B cell (primary cell): ENCODE measurements at regions of chr1 and their contacts with region 1.

Region 1: DNA sequence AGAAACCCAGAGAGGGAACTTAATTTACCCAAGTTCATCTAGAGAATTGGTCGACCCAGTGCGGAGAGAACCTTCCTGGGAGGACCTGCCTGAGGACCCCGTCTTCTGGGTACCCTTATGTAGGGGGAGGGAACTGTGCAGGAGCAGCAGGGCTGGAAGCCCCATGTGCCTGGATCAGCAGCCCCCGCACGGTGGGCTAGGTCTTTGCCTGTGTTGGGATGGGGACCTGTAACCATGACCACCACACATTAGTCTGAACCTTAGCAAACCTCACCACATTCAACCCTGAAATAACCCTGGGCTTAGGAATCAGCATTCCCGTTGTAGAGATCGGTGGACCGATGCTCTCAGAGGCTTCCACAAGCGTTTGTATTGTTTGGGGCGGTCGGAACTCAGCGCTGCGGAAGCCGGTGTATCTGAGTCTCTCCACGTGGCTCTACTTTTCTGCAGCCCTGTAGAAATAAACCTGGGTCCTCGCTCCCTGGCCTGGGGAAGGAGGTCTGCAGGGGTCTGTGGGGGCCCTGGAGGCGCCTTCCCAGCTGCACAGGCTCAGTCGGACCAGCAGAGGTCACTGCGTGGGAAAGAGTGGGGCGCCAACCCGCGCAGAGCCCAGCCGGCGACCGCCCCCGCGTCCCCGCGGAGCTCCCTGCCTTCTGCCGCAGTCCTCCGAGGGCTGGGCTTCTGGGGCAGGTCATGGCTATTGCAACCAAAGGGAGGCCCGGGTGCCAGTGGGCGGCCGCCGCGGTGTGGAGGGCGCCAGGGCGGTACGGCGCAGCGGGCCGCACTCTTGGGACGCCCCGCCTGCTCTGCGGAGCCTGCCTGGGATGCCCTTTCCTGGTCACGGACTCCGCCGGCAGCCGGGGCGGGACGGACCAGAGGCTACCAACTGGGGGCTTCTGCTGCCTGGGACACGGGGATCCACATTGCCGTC is 36.2 kb upstream of the KCNA10 start:
- DNase-seq: peak; percentile 74
- ATAC-seq: peak; percentile 93
- H3K4me3 ChIP-seq: peak overlapping the region in 2 of 5 experiments; percentile 20 to 27
- H3K4me3 Mint-ChIP-seq: peak overlapping the region; percentile 50
- H3K27ac ChIP-seq: no peak overlapping the region
- H3K27ac Mint-ChIP-seq: no peak overlapping the region
- H3K4me1 ChIP-seq: peaks cover 9 to 12% of the 10 kb centered on the region in 2 donors
- H3K4me1 Mint-ChIP-seq: peaks cover 4% of the 10 kb centered on the region
- H3K27me3 ChIP-seq: peaks cover 0 to 57% (median 24%) of the 10 kb centered on the region in 4 experiments
- H3K27me3 Mint-ChIP-seq: peaks cover 78% of the 10 kb centered on the region
- CTCF ChIP-seq: peak; percentile 83

Region 2: DNA sequence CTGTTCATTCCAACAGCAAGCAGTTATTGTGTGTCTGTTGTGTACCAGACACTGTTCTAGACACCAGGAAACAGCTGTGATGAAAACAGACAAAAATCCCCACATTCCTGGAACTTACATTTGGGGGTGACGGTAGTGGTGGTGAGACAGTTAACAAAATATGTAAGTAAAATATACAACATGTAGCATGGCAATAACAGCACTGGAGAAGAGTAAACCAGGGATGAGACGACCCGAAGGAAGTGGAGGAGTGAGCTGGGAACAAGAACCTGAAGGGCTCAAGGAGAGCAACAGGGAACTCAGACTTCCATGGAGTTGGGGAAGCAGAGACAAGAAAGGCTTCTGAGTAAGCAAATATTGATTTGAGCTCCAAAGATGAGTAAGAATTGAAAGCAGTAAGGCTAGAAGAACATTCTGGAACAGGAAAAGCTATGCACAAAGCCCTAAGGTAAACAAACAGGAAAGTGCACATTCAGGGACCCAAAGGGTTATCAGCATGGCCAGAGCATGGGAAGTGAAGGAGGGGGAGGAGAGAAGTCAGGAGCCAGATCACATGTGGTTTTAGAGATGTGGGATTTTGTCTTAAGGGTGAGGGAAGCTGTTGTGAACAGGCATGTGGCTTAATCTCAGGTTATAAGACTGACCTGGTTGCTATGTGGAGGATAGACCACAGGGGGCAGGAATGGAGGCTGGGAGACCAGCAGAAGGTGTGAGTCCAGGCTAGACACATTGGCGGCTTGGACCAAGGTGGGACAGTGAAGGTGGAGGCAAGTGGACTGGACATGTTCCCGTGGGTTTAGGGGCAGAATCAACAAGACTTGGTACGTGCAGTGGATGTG is 637.1 kb before region 1 on chr1:
- CTCF ChIA-PET with region 1: no interaction called
- POLR2A ChIA-PET with region 1: no interaction called
- intact Hi-C with region 1: no loop called
- DNase-seq: no peak
- ATAC-seq: no peak
- H3K4me3 ChIP-seq: no peak overlapping the region
- H3K4me3 Mint-ChIP-seq: no peak overlapping the region
- H3K27ac ChIP-seq: no peak overlapping the region
- H3K27ac Mint-ChIP-seq: no peak overlapping the region
- H3K4me1 ChIP-seq: no peaks in the 10 kb centered on the region
- H3K4me1 Mint-ChIP-seq: peaks cover 3% of the 10 kb centered on the region
- H3K27me3 ChIP-seq: peaks cover 0 to 18% (median 7%) of the 10 kb centered on the region in 4 experiments
- H3K27me3 Mint-ChIP-seq: peaks cover 23% of the 10 kb centered on the region
- CTCF ChIP-seq: no peak

Region 3: GRCh38 chr1:110508038-110508940 is 46.8 kb before region 1 on chr1:
- CTCF ChIA-PET with region 1: no interaction called
- POLR2A ChIA-PET with region 1: no interaction called
- intact Hi-C with region 1: no loop called
- DNase-seq: no peak
- ATAC-seq: no peak
- H3K4me3 ChIP-seq: no peak overlapping the region
- H3K4me3 Mint-ChIP-seq: no peak overlapping the region
- H3K27ac ChIP-seq: no peak overlapping the region
- H3K27ac Mint-ChIP-seq: no peak overlapping the region
- H3K4me1 ChIP-seq: no peaks in the 10 kb centered on the region
- H3K4me1 Mint-ChIP-seq: no peaks in the 10 kb centered on the region
- H3K27me3 ChIP-seq: peaks cover 0 to 6% (median 0%) of the 10 kb centered on the region in 4 experiments
- H3K27me3 Mint-ChIP-seq: peaks cover 15% of the 10 kb centered on the region
- CTCF ChIP-seq: no peak

Region 4: DNA sequence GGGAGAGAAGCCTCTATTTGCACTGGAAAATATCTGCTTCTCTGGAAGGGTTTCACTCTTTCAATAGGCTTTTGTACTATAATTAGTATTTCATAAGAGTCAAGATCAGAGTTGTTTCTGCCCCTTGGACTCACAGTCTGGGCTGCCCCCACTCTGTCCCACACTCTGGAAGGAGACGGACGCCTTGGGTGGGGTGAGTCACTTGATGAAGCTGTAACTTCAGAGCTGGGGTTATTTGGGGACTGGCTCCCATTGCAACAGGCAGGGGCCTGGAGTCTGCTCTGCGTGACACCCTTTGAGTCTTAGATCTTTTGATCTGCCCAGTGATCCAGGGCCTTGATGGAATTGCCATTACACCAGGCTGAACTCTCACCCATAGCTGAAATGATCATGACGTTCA is 32.1 kb before region 1 on chr1:
- CTCF ChIA-PET with region 1: no interaction called
- POLR2A ChIA-PET with region 1: no interaction called
- intact Hi-C with region 1: no loop called
- DNase-seq: no peak
- ATAC-seq: no peak
- H3K4me3 ChIP-seq: no peak overlapping the region
- H3K4me3 Mint-ChIP-seq: no peak overlapping the region
- H3K27ac ChIP-seq: no peak overlapping the region
- H3K27ac Mint-ChIP-seq: no peak overlapping the region
- H3K4me1 ChIP-seq: peaks cover 3 to 6% of the 10 kb centered on the region in 2 donors
- H3K4me1 Mint-ChIP-seq: peaks cover 3% of the 10 kb centered on the region
- H3K27me3 ChIP-seq: peaks cover 0 to 22% (median 5%) of the 10 kb centered on the region in 4 experiments
- H3K27me3 Mint-ChIP-seq: peaks cover 47% of the 10 kb centered on the region
- CTCF ChIP-seq: no peak

Region 5: GRCh38 chr1:110544753-110545152 is 10.4 kb before region 1 on chr1:
- CTCF ChIA-PET with region 1: interaction called, 10 read pairs
- POLR2A ChIA-PET with region 1: no interaction called
- intact Hi-C with region 1: no loop called
- DNase-seq: no peak
- ATAC-seq: no peak
- H3K4me3 ChIP-seq: no peak overlapping the region
- H3K4me3 Mint-ChIP-seq: no peak overlapping the region
- H3K27ac ChIP-seq: no peak overlapping the region
- H3K27ac Mint-ChIP-seq: no peak overlapping the region
- H3K4me1 ChIP-seq: no peaks in the 10 kb centered on the region
- H3K4me1 Mint-ChIP-seq: no peaks in the 10 kb centered on the region
- H3K27me3 ChIP-seq: peaks cover 0 to 9% (median 2%) of the 10 kb centered on the region in 4 experiments
- H3K27me3 Mint-ChIP-seq: peaks cover 53% of the 10 kb centered on the region
- CTCF ChIP-seq: no peak

Region 6: GRCh38 chr1:110872745-110873720 is 317.9 kb after region 1 on chr1 and contains the start of gene CD53:
- CTCF ChIA-PET with region 1: no interaction called
- POLR2A ChIA-PET with region 1: no interaction called
- intact Hi-C with region 1: no loop called
- DNase-seq: peak; percentile 92
- ATAC-seq: peak; percentile 66
- H3K4me3 ChIP-seq: peak within 1 kb of the TSS; percentile 73 to 100 (median 97)
- H3K4me3 Mint-ChIP-seq: peak within 1 kb of the TSS; percentile 99
- H3K27ac ChIP-seq: peak within 1 kb of the TSS; percentile 96 to 99
- H3K27ac Mint-ChIP-seq: peak within 1 kb of the TSS; percentile 99
- H3K4me1 ChIP-seq: peaks cover 60% of the 10 kb centered on the region in 2 donors
- H3K4me1 Mint-ChIP-seq: peaks cover 70% of the 10 kb centered on the region
- H3K27me3 ChIP-seq: no peaks in the 10 kb centered on the region
- H3K27me3 Mint-ChIP-seq: no peaks in the 10 kb centered on the region
- CTCF ChIP-seq: no peak
- total RNA-seq, gene CD53: 490 and 495 TPM in 2 replicates